Prostate gland (tissue), 2 donors: ENCODE measurements at regions of chr2 and their contacts with region 1.

Region 1: DNA sequence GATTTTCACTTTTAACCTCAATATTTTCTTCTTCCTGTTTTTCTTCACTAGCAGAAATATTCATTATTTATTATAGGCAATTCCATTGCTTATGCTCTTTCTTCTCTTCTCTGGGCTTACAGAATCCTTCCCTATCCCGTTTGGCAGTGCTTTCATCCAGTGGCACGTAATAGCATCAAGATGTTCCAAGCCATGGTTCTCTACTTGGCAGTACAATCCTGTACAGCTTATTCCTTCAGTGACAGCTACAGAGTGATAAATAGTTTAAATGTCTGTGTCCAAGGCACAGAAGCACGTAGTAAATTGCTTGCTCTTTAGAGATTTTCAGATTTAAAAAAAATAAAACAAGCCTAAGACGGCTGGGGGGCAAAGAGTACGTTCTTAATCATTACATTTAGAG is 1964.3 kb downstream of the SUCLG1 start:
- DNase-seq: no peak
- H3K4me3 ChIP-seq: no peak overlapping the region
- H3K27ac ChIP-seq: no peak overlapping the region
- H3K4me1 ChIP-seq: no peaks in the 10 kb centered on the region
- H3K27me3 ChIP-seq: no peaks in the 10 kb centered on the region
- CTCF ChIP-seq: no peak
- POLR2A ChIP-seq: no peak

Region 2: GRCh38 chr2:82027901-82028615 is 466.7 kb before region 1 on chr2:
- intact Hi-C with region 1: no loop called
- DNase-seq: peak; percentile 26
- H3K4me3 ChIP-seq: no peak overlapping the region
- H3K27ac ChIP-seq: no peak overlapping the region
- H3K4me1 ChIP-seq: no peaks in the 10 kb centered on the region
- H3K27me3 ChIP-seq: no peaks in the 10 kb centered on the region
- CTCF ChIP-seq: no peak
- POLR2A ChIP-seq: no peak

Region 3: GRCh38 chr2:82411071-82411470 is 83.7 kb before region 1 on chr2:
- intact Hi-C with region 1: loop called (anchors 5 kb)
- DNase-seq: no peak
- H3K4me3 ChIP-seq: no peak overlapping the region
- H3K27ac ChIP-seq: no peak overlapping the region
- H3K4me1 ChIP-seq: no peaks in the 10 kb centered on the region
- H3K27me3 ChIP-seq: no peaks in the 10 kb centered on the region
- CTCF ChIP-seq: no peak
- POLR2A ChIP-seq: no peak

Region 4: GRCh38 chr2:82790206-82791021 is 295.7 kb after region 1 on chr2:
- intact Hi-C with region 1: loop called (anchors 5 kb)
- DNase-seq: no peak
- H3K4me3 ChIP-seq: no peak overlapping the region
- H3K27ac ChIP-seq: no peak overlapping the region
- H3K4me1 ChIP-seq: no peaks in the 10 kb centered on the region
- H3K27me3 ChIP-seq: no peaks in the 10 kb centered on the region
- CTCF ChIP-seq: no peak
- POLR2A ChIP-seq: no peak

Region 5: GRCh38 chr2:82959727-82960126 is 465.0 kb after region 1 on chr2:
- intact Hi-C with region 1: no loop called
- DNase-seq: no peak
- H3K4me3 ChIP-seq: no peak overlapping the region
- H3K27ac ChIP-seq: no peak overlapping the region
- H3K4me1 ChIP-seq: no peaks in the 10 kb centered on the region
- H3K27me3 ChIP-seq: no peaks in the 10 kb centered on the region
- CTCF ChIP-seq: no peak
- POLR2A ChIP-seq: no peak